Uterus (tissue), 4 donors: ENCODE measurements at regions of chr9 and their contacts with region 1.

Region 1: GRCh38 chr9:134171316-134172197 is 7.2 kb upstream of the RNU6ATAC start:
- DNase-seq: no peak
- H3K4me3 ChIP-seq: no peak overlapping the region
- H3K27ac ChIP-seq: peak overlapping the region in 1 of 2 donors; percentile 5
- H3K4me1 ChIP-seq: no peaks in the 10 kb centered on the region
- H3K27me3 ChIP-seq: no peaks in the 10 kb centered on the region
- CTCF ChIP-seq: no peak
- POLR2A ChIP-seq: no peak

Region 2: DNA sequence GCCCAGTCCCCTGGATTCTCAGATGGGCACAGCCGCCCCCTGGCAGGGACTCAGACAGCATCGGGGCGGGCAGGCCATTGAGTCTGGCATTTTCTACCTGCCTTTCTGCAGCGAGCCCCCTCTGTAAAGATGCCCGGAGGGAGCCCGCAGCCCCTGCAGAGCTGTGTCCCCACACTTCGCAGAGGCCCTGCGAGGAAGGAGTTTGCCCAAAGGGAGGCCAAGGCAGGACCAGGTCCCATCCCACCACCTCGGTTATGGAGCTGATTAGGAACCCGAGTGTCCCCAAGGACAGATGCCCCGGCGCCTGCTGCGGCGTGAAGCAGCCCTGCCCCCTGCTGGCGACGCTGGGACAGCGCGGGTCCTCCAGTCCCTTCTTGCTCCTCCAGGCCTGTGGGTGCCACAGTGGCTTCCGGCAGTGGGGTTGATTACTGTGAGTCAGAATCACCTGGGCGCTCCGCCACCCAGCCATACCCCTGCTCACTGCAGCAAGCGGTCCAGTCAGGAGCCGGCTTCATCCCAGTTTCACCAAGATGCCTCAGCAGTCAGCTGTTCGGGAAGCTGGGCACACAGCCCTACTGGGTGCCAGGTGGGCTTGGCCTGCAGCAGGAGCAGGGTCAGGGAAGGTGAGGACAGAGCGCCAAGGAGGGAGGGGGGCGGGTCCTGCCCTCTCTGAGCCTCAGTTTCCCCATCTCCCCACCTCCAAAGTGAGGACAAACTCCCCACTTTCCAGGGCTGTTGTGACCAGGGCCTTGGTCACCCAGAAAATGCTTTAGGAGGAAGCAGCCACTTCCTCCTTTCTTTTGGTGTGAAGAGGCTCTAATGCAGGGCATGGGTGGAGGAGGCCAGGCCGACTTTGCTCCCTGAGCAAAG is 271.8 kb after region 1 on chr9:
- intact Hi-C with region 1: loop called (anchors 2 kb)
- DNase-seq: peak; percentile 87 to 90
- H3K4me3 ChIP-seq: no peak overlapping the region
- H3K27ac ChIP-seq: no peak overlapping the region
- H3K4me1 ChIP-seq: peaks cover 0 to 24% of the 10 kb centered on the region in 2 donors
- H3K27me3 ChIP-seq: no peaks in the 10 kb centered on the region
- CTCF ChIP-seq: peak; percentile 99
- POLR2A ChIP-seq: peak in 1 of 2 donors; percentile 35